MCF 10A (cell line): ENCODE measurements at regions of chr9 and their contacts with region 1.

Region 1: DNA sequence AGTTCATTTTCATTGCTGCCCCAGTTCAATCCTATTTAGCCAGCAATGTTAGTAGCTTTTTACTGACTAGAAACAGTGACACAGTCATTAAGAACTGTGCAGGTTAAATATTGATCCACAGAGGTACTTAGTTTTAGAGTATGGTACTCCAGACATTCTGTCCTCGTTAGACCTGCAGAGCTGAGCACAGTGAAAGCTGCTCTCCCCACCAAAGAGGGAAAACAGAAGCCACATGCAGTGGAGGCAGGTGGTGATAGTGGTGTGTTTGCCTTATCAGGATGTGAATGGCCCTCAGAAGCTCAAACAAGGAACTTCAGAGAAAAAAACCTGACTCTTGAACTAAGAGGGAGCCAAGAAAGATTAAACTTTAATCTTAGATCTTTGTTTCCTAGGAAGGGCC is 75.5 kb downstream of the UNC13B start:
- DNase-seq: no peak
- H3K4me3 Mint-ChIP-seq: no peak overlapping the region
- H3K27ac Mint-ChIP-seq: no peak overlapping the region
- H3K4me1 Mint-ChIP-seq: no peaks in the 10 kb centered on the region
- H3K27me3 Mint-ChIP-seq: no peaks in the 10 kb centered on the region
- CTCF ChIP-seq: no peak

Region 2: DNA sequence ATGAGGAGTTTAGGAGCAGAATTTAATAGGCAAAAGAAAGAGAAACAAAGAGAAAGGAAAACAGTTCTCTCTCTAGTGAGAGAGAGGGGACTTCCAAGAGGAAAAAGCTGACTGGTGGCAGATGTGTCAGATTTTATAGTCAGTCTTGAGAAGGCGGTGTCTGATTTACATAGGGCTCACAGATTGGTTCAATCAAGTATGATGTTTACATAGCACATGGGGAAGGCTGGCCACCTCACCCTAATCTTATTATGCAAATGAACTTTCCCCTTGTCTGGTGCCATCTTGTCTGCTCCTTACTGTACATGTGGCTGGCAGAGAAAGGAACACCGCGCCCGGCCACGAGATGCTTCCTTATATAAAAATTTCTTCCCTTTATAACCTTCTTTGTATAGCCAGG is 50.8 kb before region 1 on chr9:
- CTCF ChIA-PET with region 1: no interaction called
- POLR2A ChIA-PET with region 1: no interaction called
- intact Hi-C with region 1: loop called (anchors 5 kb)
- DNase-seq: no peak
- H3K4me3 Mint-ChIP-seq: no peak overlapping the region
- H3K27ac Mint-ChIP-seq: no peak overlapping the region
- H3K4me1 Mint-ChIP-seq: no peaks in the 10 kb centered on the region
- H3K27me3 Mint-ChIP-seq: no peaks in the 10 kb centered on the region
- CTCF ChIP-seq: no peak

Region 3: DNA sequence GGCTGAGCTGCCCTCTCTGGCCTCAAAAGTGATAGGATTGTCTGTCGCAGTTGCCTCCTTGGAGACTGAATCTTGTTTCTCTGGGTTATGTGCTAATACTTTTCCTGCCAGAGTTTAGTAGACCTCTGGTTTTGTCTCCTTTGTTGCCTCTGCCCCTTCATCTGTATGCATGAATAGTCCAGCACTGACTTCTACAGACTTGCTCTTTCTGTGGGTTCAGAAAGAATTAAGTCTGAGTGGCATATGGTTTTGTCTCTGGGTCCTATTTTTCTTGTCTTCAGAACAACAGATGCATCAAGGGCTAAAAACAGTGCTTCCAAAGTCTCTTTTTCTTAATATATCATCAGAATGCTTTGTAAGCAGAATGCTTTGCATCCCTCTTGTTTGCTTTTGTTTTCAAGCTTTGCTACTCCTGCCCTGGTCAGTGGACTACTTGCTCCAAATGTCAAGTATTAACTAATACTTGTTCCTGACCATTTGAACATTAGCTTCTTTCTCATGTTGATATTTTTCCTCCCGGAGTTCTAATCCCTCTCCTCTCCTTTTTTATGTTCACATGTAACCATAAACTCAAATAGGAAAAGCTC is 56.2 kb after region 1 on chr9:
- CTCF ChIA-PET with region 1: no interaction called
- POLR2A ChIA-PET with region 1: no interaction called
- intact Hi-C with region 1: no loop called
- DNase-seq: no peak
- H3K4me3 Mint-ChIP-seq: no peak overlapping the region
- H3K27ac Mint-ChIP-seq: no peak overlapping the region
- H3K4me1 Mint-ChIP-seq: peaks cover 3% of the 10 kb centered on the region
- H3K27me3 Mint-ChIP-seq: no peaks in the 10 kb centered on the region
- CTCF ChIP-seq: no peak

Region 4: DNA sequence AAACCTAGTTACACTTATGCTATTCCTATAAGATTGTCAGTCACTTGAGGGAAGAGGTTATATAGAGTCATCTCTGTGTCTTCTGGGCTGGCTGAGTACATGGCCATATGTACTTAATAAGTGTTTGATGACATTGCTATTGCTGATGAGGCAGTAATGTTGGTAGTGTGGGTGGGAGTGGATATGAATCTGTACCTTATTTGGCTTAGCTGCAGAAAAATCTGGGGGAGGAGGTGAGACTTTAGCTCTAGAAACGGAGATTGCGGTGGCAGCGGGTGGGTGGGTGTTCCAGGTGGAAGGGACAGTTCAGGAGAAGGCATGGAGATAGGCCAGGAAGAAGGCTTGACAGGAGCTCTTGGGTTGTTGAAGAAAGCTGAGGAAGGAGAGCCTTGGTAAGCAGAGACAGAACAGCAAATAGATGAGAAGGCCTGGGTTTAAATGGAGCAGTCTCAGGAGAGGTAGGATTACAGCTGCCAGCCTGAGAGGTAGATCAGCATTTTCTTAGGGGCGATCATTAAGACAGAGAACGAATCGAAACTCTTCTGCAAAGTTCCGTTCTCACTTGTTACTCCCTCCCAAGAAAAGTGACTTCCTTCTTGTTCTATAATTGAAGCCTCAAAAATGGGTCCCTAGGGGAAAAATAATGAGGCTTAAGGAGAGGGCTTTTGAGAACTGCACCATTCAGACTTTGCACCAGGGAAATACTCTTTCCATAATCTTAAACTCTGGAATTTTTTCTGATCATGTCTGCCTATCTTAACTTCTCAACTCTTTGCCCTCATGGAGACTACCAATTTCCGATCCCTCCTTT is 85.0 kb after region 1 on chr9:
- CTCF ChIA-PET with region 1: no interaction called
- POLR2A ChIA-PET with region 1: no interaction called
- intact Hi-C with region 1: no loop called
- DNase-seq: no peak
- H3K4me3 Mint-ChIP-seq: no peak overlapping the region
- H3K27ac Mint-ChIP-seq: no peak overlapping the region
- H3K4me1 Mint-ChIP-seq: no peaks in the 10 kb centered on the region
- H3K27me3 Mint-ChIP-seq: no peaks in the 10 kb centered on the region
- CTCF ChIP-seq: no peak